ENCODE measurements at regions of chr12 and their contacts with region 1.

Region 1: DNA sequence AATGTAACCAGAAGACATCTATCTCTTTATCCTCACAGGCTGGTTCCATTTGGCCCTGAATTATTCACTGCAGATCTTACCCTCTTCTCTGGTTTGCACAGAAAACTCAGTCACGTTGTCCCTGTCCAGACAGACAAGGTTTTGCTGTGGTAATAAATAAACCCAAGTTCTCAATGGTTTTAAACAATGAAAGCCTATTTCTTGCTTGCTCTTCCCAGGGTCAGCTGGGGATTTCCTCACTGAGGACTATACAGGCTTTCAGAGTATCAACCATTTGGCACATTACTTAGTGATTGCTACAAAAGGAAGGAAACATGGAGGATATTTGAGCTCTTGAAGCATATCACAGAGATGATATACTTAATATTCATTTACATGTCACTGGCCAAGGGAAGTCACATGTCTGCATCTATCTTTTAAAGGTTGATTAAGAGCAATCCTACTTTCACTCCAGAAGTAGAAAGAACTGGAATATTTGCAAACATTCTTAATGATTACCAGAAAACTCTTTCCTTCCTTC is 24.4 kb upstream of the E2F7 start:
- DNase-seq: no peak
- H3K4me3 ChIP-seq: no peak overlapping the region
- H3K27ac ChIP-seq: no peak overlapping the region
- H3K4me1 ChIP-seq: no peaks in the 10 kb centered on the region; a peak in 1 of 7 replicates
- H3K27me3 ChIP-seq: no peaks in the 10 kb centered on the region
- CTCF ChIP-seq: no peak
- EP300 ChIP-seq: no peak
- POLR2A ChIP-seq: no peak
- RAD21 ChIP-seq: no peak

Region 2: DNA sequence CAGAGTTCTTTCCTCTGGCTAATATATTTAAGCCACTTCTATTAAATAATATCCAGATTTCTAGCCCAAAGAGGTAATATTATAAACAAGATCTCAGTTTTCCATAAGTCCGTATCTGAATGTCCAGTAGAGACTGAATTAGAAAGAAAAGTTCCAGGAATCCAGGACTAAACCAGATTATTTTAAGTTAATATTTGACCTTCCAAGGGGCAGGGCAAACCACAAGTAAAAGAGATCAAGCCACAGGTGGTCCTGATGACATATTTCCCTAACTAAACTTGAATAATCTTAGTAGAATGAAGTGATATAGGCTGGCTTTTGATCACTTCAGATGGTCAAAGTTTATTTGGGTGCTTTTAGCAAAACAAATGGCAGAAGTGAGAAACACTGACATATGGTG is 18.9 kb after region 1 on chr12:
- CTCF ChIA-PET with region 1: interaction called, 10 read pairs
- POLR2A ChIA-PET with region 1: no interaction called
- DNase-seq: no peak
- H3K4me3 ChIP-seq: no peak overlapping the region
- H3K27ac ChIP-seq: no peak overlapping the region
- H3K4me1 ChIP-seq: no peaks in the 10 kb centered on the region
- H3K27me3 ChIP-seq: no peaks in the 10 kb centered on the region
- CTCF ChIP-seq: no peak
- EP300 ChIP-seq: no peak
- POLR2A ChIP-seq: no peak
- RAD21 ChIP-seq: no peak